Left ventricle myocardium inferior (tissue), 1 donor: ENCODE measurements at regions of chr5 and their contacts with region 1.

Region 1: GRCh38 chr5:113330533-113331208 is 104.1 kb downstream of the TSSK1B start:
- DNase-seq: peak; percentile 36
- H3K4me3 ChIP-seq: no peak overlapping the region
- H3K27ac ChIP-seq: no peak overlapping the region
- H3K4me1 ChIP-seq: peaks cover 10% of the 10 kb centered on the region
- H3K27me3 ChIP-seq: no peaks in the 10 kb centered on the region
- CTCF ChIP-seq: peak; percentile 64

Region 2: GRCh38 chr5:113606298-113607134 is 275.8 kb after region 1 on chr5:
- intact Hi-C with region 1: loop called (anchors 10 kb)
- DNase-seq: no peak
- H3K4me3 ChIP-seq: peak overlapping the region; percentile 24
- H3K27ac ChIP-seq: no peak overlapping the region
- H3K4me1 ChIP-seq: no peaks in the 10 kb centered on the region
- H3K27me3 ChIP-seq: no peaks in the 10 kb centered on the region
- CTCF ChIP-seq: peak; percentile 82

Region 3: GRCh38 chr5:114010362-114010761 is 679.7 kb after region 1 on chr5:
- intact Hi-C with region 1: no loop called
- DNase-seq: no peak
- H3K4me3 ChIP-seq: no peak overlapping the region
- H3K27ac ChIP-seq: no peak overlapping the region
- H3K4me1 ChIP-seq: no peaks in the 10 kb centered on the region
- H3K27me3 ChIP-seq: peaks cover 3% of the 10 kb centered on the region
- CTCF ChIP-seq: no peak